ENCODE measurements at regions of chr2 and their contacts with region 1.

Region 1: DNA sequence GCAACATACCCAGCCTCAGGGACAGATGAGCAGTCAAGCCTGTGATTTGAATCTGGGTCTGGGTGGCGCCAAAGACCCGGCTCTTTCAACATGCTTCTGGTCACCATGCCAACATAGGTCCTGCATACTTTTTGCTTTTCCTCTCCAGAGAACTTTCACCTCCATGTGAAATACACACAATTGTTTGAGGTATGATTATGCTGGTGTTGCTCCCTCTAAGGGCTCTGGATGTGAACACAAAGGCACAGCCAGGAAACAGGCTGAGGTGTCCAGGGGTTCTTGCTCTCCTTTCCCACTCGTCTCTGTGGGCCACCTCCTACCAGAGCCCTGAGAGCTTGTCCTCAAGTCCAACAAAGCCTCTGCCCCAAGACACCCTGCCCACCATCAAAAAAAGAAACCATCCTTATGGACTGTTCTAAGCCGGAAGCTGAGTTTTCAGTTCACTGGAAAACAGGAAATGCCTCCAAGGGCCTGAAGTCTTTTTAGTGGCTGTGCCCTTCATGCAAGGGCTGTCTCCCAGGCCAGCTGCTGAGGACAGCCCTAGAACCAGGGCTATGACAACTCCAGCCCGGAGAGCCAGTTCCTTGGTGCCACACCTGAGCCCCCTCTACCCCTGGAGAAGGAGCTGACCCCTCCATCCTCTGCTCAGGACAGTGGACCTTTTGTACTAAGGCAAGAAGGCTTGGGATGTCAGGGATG is 100.2 kb upstream of the EPAS1 start:
- DNase-seq: no peak

Region 2: DNA sequence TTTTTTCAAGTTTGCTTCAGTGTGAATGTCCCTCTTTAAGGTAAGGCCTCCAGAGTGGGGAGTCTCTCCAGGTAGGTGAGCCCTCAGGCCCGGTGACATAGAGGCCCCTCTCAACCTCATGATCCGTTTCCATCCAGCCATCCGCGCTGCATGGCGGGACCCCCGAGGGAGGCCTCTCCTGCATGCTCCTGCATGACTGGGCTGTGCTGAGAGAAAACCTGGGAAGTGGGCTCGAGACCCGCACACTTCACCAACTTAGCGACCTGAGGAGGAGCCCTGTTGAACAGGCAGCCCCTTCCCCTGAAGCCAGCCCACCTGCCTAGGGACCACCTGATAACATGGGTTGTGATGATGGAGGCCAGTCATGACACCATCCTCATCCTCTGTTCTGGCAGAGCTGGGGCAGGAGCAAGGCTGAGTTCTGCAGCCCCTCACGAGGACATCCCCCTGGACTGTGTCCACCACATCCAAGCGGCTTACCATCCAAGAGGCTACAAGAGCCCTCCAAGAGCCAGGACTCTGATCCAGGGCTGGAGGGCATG is 31.0 kb before region 1 on chr2:
- intact Hi-C with region 1: loop called in 1 of 2 experiments (anchors 1 kb)
- DNase-seq: no peak

Measured in posterior vena cava (tissue), 2 donors.